A673 (cell line): ENCODE measurements at regions of chr22 and their contacts with region 1.

Region 1: DNA sequence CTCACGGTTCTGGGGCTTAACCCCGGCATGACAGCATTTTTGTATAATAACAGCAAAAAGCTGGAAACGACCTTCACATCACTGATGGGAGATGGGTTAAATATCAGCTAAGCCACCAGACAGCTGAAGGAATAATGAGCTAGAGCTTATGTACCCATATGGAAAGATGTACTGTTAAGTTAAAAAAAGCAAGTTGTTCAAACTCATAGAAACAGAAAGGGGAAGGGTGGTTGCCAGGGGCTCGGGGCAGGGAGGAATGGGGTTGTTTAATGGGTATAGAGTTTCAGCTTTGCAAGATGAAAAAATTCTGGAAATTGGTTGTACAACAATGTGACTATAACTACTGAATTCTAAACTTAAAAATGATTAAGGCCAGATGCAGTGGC is 35.7 kb downstream of the MCHR1 start:
- DNase-seq: no peak
- H3K4me3 ChIP-seq: no peak overlapping the region
- H3K27ac ChIP-seq: no peak overlapping the region
- H3K4me1 ChIP-seq: peaks cover 20% of the 10 kb centered on the region
- H3K27me3 ChIP-seq: no peaks in the 10 kb centered on the region
- CTCF ChIP-seq: no peak

Region 2: DNA sequence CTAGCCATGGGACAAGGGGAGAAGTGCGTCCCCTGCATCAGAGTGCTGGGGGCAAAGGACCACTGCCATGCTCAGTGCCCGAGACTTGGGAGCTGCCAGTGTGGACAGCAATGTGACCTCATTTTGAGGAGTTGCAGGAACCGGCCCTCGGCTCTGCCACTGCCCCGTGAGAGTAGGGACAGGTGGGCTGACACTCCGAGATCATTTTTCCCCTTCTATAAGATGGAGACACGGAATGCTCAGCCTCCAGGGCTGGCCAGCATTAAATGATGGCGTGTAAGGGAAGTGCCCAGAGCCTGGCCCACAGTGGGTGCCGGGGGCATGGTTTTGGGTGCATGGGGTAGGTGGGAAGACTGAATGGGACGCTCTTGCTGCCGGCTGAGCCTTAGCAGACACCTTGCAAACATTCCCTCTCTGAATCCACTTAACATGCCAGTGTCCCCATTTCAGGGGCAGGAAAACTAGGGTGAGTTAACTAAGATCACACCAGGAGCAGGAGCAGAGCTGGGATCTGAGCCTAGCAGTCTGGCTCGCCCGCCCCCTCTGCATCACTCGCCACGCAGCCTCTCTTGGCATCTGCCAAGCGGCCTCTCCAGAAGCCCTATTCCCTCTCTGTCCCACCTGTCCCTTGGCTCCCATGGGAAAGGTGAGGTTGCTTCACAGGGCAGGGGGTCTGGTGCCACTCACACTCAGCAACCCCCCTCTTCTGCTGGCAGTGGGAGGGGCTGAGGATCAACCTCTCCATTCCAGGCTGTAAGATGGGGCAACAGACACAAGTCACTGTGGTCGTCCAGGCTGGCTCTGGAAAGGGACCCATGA is 1884.7 kb before region 1 on chr22:
- CTCF ChIA-PET with region 1: no interaction called
- POLR2A ChIA-PET with region 1: interaction called, 14 read pairs
- intact Hi-C with region 1: no loop called
- DNase-seq: no peak
- H3K4me3 ChIP-seq: no peak overlapping the region
- H3K27ac ChIP-seq: no peak overlapping the region
- H3K4me1 ChIP-seq: peaks cover 10% of the 10 kb centered on the region
- H3K27me3 ChIP-seq: no peaks in the 10 kb centered on the region
- CTCF ChIP-seq: no peak

Region 3: GRCh38 chr22:39959640-39960447 is 755.1 kb before region 1 on chr22 and contains the start of gene TMA7B:
- CTCF ChIA-PET with region 1: no interaction called
- POLR2A ChIA-PET with region 1: no interaction called
- intact Hi-C with region 1: no loop called
- DNase-seq: peak; percentile 44
- H3K4me3 ChIP-seq: no peak within 1 kb of the TSS
- H3K27ac ChIP-seq: no peak within 1 kb of the TSS
- H3K4me1 ChIP-seq: no peaks in the 10 kb centered on the region
- H3K27me3 ChIP-seq: no peaks in the 10 kb centered on the region
- CTCF ChIP-seq: peak; percentile 25; the same call in 1 of the 2 replicates
- total RNA-seq, gene TMA7B: not detected in 2 replicates

Region 4: GRCh38 chr22:40826984-40827741 is 112.2 kb after region 1 on chr22:
- CTCF ChIA-PET with region 1: no interaction called
- POLR2A ChIA-PET with region 1: interaction called, 10 read pairs
- intact Hi-C with region 1: no loop called
- DNase-seq: peak; percentile 39
- H3K4me3 ChIP-seq: no peak overlapping the region
- H3K27ac ChIP-seq: no peak overlapping the region
- H3K4me1 ChIP-seq: peaks cover 55% of the 10 kb centered on the region
- H3K27me3 ChIP-seq: no peaks in the 10 kb centered on the region
- CTCF ChIP-seq: no peak